Activated CD4-positive, alpha-beta T cell treated with anti-CD3 and anti-CD28 coated beads, Interleukin-2, amount 10 ng/mL, durations not matched to agents 24 days and 14 days (primary cell): ENCODE measurements at regions of chr9 and their contacts with region 1.

Region 1: GRCh38 chr9:113349445-113350094 is at the start of gene BSPRY:
- DNase-seq: peak; percentile 87
- H3K4me3 Mint-ChIP-seq: peak within 1 kb of the TSS; percentile 89
- H3K27ac Mint-ChIP-seq: peak within 1 kb of the TSS; percentile 90
- H3K4me1 Mint-ChIP-seq: peaks cover 56% of the 10 kb centered on the region
- H3K27me3 Mint-ChIP-seq: no peaks in the 10 kb centered on the region
- total RNA-seq, gene BSPRY: 10.5 and 10.6 TPM in 2 replicates

Region 2: GRCh38 chr9:113309204-113309813 is 40.3 kb before region 1 on chr9:
- intact Hi-C with region 1: loop called (anchors 5 kb)
- DNase-seq: peak; percentile 79
- H3K4me3 Mint-ChIP-seq: no peak overlapping the region
- H3K27ac Mint-ChIP-seq: no peak overlapping the region
- H3K4me1 Mint-ChIP-seq: peaks cover 2% of the 10 kb centered on the region
- H3K27me3 Mint-ChIP-seq: peaks cover 3% of the 10 kb centered on the region

Region 3: GRCh38 chr9:113361304-113362018 is 11.9 kb after region 1 on chr9:
- intact Hi-C with region 1: loop called (anchors 1 kb)
- DNase-seq: no peak
- H3K4me3 Mint-ChIP-seq: no peak overlapping the region
- H3K27ac Mint-ChIP-seq: peak overlapping the region; percentile 71
- H3K4me1 Mint-ChIP-seq: peaks cover 18% of the 10 kb centered on the region
- H3K27me3 Mint-ChIP-seq: no peaks in the 10 kb centered on the region

Region 4: DNA sequence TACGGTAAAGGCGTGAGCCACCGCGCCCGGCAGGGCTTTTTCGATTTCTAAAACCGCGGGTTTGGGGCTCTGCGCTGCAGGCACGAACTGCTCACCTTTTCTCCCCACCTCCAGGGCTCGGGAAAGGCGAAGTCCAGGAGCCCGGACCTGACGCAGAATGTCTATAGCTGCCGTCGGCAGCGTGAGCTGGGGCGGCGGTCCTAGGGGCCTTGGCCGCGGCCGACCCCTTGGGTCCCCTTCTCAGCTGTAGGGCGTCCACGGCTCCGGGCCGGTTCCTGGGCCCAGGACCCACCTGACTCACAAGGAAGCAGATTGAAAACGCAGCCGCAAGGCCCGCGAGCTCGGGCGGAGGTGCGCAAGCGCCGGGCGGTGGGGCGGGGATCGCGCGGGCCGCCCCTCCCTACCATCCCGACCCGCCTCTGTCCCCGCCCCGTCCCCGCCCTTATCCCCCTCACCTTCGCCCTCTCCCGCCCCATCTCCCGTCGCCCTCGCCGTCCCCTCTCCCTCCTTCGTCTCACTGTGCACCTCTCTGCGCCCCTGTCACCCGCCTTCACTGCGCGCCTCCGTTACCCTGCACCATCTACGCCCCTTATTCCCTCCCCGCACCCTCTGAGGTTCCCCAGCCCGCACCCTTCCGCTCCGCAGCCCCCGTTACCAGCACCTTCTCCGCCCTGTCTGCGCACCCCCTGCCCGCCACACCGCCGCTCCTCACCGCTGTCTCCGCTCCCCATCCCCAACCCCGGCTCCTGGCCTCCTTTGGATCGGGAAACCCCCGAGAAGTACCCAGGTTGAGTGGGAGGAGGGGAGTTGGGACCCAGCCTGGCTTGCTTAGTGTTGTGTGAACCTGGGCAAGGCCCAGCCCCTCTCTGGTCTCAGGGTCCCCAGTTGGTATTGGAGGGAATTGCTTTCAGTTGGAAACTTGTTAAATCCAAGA is 27.3 kb after region 1 on chr9 and contains the start of gene HDHD3:
- intact Hi-C with region 1: loop called (anchors 1 kb)
- DNase-seq: peak; percentile 95
- H3K4me3 Mint-ChIP-seq: peak within 1 kb of the TSS; percentile 92
- H3K27ac Mint-ChIP-seq: peak within 1 kb of the TSS; percentile 83
- H3K4me1 Mint-ChIP-seq: peaks cover 15% of the 10 kb centered on the region
- H3K27me3 Mint-ChIP-seq: no peaks in the 10 kb centered on the region
- total RNA-seq, gene HDHD3: 16.5 and 17.8 TPM in 2 replicates